Mammary epithelial cell (primary cell): ENCODE measurements at regions of chr9 and their contacts with region 1.

Region 1: DNA sequence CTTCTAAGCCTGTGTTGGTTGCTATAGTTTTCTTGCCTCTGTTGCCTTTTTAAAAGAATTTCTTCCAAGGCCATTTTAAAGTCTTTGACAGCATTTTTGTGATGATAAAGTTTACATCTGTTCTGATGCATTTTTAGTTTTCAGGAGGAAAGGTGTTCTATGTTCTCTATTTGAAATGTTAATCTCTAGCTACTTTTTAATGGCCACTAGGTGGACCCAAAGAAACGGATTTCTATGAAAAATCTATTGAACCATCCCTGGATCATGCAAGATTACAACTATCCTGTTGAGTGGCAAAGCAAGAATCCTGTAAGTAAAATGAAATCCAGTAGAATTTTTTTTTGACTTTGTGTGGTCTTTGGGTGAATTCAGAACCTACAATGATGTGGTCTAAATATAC is 60.2 kb downstream of the MELK start:
- DNase-seq: peak; percentile 12
- H3K4me3 ChIP-seq: no peak overlapping the region
- H3K27ac ChIP-seq: no peak overlapping the region
- H3K4me1 ChIP-seq: no peaks in the 10 kb centered on the region
- H3K27me3 ChIP-seq: no peaks in the 10 kb centered on the region
- CTCF ChIP-seq: peak; percentile 53 to 58

Region 2: DNA sequence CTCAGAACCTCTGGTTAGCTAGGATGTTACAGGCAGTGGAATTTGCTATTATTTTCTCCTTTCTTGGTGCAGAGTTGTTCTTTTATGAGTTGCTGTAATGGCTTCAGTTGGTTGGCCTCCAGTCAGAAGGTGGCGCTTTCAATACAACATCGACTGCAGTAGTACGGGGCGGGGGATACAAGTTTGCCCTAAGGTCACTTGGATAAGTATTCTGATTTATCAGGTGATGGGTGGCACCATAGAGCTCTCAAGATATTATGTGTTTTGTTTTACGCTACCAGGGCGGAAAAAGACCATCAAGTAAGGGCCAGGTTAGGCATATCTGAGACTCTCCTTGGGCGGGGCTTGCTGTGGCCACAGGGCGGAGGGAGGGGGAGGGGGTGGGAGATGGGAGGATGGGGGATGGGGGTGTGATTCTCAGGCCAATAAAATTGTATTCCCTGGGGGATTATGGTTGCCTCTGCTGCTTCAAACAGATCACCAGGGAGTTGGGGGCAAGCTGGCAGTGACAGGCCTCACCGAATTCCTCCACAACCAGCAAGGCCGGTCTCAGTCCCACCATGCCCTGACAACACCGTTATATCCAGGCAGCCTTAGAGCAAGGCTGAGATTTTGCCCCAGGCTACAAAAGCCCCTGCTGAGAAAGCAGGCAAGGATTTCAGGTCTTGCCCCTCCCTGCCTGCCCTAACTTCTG is 216.9 kb before region 1 on chr9:
- CTCF ChIA-PET with region 1: no interaction called
- dilution Hi-C with region 1: no loop called
- in situ Hi-C with region 1: no loop called
- intact Hi-C with region 1: no loop called
- DNase-seq: no peak
- H3K4me3 ChIP-seq: no peak overlapping the region
- H3K27ac ChIP-seq: no peak overlapping the region
- H3K4me1 ChIP-seq: peaks cover 3% of the 10 kb centered on the region
- H3K27me3 ChIP-seq: no peaks in the 10 kb centered on the region
- CTCF ChIP-seq: no peak

Region 3: DNA sequence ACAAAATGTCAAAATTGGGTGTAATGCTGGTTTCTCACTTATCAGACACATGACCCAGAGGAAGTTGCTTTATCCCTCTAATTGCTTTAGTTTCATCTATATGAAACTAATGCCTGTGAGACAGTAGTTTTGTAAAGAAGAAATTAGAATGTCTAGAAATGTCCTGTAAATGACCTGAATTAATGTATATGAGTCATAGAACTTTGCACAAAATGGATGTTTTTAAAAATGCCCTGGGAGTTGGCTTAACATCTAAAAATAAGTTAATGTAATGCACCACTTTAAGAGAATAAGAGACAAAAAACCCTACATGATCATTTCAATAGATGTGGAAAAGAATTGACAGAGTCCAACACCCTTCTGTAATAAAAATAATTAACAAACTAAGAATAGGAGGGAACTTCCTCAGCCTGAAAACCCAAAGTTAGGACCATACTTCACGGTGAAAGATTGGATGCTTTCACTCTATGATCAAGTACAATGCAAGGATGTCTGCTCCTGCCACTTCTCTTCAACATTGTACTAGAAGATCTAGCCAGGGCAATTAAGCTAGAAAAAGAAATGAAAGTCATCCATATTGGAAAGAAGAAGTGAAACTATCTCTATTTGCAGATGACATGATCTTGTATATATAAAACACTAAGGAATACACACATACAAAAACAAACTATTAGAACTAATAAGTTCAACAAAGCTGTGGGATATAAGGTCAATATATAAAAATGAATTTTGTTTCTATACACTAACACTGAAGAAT is 57.7 kb after region 1 on chr9:
- CTCF ChIA-PET with region 1: no interaction called
- dilution Hi-C with region 1: no loop called
- in situ Hi-C with region 1: loop called in 1 of 2 experiments (anchors 10 kb)
- intact Hi-C with region 1: no loop called
- DNase-seq: no peak
- H3K4me3 ChIP-seq: no peak overlapping the region
- H3K27ac ChIP-seq: no peak overlapping the region
- H3K4me1 ChIP-seq: no peaks in the 10 kb centered on the region
- H3K27me3 ChIP-seq: no peaks in the 10 kb centered on the region
- CTCF ChIP-seq: no peak